IMR-90 (cell line): ENCODE measurements at regions of chr2 and their contacts with region 1.

Region 1: DNA sequence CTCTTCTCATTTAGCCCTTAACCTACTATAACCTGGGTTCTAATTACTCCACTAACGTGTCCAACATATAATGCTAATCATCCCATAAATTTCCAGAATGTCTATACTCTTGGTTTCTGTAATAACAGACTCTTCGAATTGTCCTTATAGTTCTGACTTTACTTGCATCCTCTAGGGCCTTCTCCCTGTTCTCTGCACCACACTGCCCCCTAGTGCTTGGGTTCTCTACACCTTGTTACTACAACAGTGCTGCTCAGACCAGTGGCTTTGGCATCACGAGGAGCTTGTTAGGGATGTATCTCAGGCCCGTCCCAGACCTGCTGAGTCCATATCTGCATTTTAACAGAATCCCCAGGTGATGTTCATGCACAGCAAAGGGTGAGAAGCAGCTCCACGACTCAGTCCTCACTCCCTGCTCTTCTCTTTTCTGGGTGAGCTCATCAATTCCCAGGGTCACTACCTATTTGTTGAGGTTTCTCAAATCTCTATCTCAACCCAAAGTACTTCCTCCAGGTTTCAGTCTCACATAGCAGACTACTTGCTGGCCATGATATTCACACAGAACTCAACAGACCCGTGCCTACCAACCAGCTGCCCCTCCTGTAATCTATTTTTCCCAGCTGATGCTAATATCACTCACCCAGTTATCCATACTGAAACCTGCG is 14.5 kb upstream of the DDX1 start:
- DNase-seq: peak; percentile 78
- ATAC-seq: peak; percentile 98
- H3K4me3 ChIP-seq: no peak overlapping the region
- H3K27ac ChIP-seq: no peak overlapping the region
- H3K4me1 ChIP-seq: no peaks in the 10 kb centered on the region
- H3K27me3 ChIP-seq: no peaks in the 10 kb centered on the region
- CTCF ChIP-seq: peak; percentile 84
- POLR2A ChIP-seq: no peak
- RAD21 ChIP-seq: peak; percentile 91

Region 2: DNA sequence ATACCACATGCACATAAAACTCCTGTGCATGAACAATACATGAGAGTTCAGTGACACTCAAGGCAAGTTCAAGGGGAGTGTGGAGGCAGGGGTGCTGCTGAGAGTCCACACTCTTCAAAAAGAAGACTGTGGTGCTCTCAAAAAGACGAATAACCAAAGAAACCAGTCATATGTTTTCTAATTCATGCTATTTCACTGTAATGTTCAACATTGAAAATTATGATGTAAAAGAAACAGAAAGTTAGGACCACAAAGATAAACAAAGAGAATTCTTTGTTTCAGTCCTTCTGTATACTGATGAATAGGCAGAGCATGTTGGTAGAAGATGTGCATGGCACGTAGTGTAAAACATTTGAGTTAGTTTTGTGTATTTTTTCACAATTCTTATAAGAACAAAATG is 1808.9 kb before region 1 on chr2:
- CTCF ChIA-PET with region 1: no interaction called
- POLR2A ChIA-PET with region 1: no interaction called
- dilution Hi-C with region 1: no loop called
- in situ Hi-C with region 1: no loop called
- intact Hi-C with region 1: no loop called
- DNase-seq: no peak
- ATAC-seq: no peak
- H3K4me3 ChIP-seq: no peak overlapping the region
- H3K27ac ChIP-seq: no peak overlapping the region
- H3K4me1 ChIP-seq: no peaks in the 10 kb centered on the region
- H3K27me3 ChIP-seq: no peaks in the 10 kb centered on the region
- CTCF ChIP-seq: no peak
- POLR2A ChIP-seq: no peak
- RAD21 ChIP-seq: no peak

Region 3: GRCh38 chr2:14428056-14428455 is 1149.1 kb before region 1 on chr2:
- CTCF ChIA-PET with region 1: no interaction called
- POLR2A ChIA-PET with region 1: no interaction called
- dilution Hi-C with region 1: no loop called
- in situ Hi-C with region 1: loop called (anchors 10 kb)
- intact Hi-C with region 1: loop called (anchors 5 kb)
- DNase-seq: peak; percentile 53
- ATAC-seq: peak; percentile 40; the same call in 1 of the 2 replicates
- H3K4me3 ChIP-seq: no peak overlapping the region
- H3K27ac ChIP-seq: no peak overlapping the region
- H3K4me1 ChIP-seq: no peaks in the 10 kb centered on the region
- H3K27me3 ChIP-seq: no peaks in the 10 kb centered on the region
- CTCF ChIP-seq: peak; percentile 44
- POLR2A ChIP-seq: no peak
- RAD21 ChIP-seq: peak; percentile 64

Region 4: GRCh38 chr2:14516844-14517243 is 1060.4 kb before region 1 on chr2:
- CTCF ChIA-PET with region 1: no interaction called
- POLR2A ChIA-PET with region 1: no interaction called
- dilution Hi-C with region 1: no loop called
- in situ Hi-C with region 1: loop called (anchors 25 kb)
- intact Hi-C with region 1: loop called (anchors 10 kb)
- DNase-seq: peak; percentile 99
- ATAC-seq: peak; percentile 95
- H3K4me3 ChIP-seq: no peak overlapping the region
- H3K27ac ChIP-seq: peak overlapping the region; percentile 45; the same call in 1 of the 2 replicates
- H3K4me1 ChIP-seq: peaks cover 5% of the 10 kb centered on the region
- H3K27me3 ChIP-seq: no peaks in the 10 kb centered on the region
- CTCF ChIP-seq: no peak
- POLR2A ChIP-seq: no peak
- RAD21 ChIP-seq: no peak

Region 5: DNA sequence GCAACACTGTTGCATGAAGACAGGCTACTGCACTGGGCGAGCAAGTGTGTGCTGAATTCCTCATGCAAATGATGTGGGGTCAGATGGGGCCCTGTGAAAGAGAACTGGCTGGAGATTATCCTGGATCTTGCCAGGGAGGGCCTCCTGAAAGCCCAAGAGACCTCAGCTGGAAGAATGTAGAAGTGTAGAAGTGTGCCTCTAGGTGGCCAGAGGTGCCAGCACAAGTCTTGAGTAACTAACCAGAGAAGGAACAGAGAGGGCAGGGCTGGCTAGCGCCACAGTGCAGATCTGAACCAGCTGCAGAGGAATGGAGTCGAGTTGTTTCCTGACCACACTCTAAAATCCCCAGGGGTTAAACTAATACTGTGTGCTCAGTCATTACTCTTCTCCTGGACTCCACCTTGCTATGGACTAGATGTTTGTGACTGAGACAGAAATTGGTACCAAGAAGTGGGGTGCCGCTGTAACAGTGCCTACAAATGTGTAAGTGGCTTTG is 545.4 kb before region 1 on chr2:
- CTCF ChIA-PET with region 1: no interaction called
- POLR2A ChIA-PET with region 1: no interaction called
- dilution Hi-C with region 1: no loop called
- in situ Hi-C with region 1: loop called (anchors 25 kb)
- intact Hi-C with region 1: no loop called
- DNase-seq: no peak
- ATAC-seq: no peak; the same call in 1 of the 2 replicates
- H3K4me3 ChIP-seq: no peak overlapping the region
- H3K27ac ChIP-seq: no peak overlapping the region
- H3K4me1 ChIP-seq: no peaks in the 10 kb centered on the region
- H3K27me3 ChIP-seq: no peaks in the 10 kb centered on the region; the same call in 1 of the 2 replicates
- CTCF ChIP-seq: no peak
- POLR2A ChIP-seq: no peak
- RAD21 ChIP-seq: no peak

Region 6: DNA sequence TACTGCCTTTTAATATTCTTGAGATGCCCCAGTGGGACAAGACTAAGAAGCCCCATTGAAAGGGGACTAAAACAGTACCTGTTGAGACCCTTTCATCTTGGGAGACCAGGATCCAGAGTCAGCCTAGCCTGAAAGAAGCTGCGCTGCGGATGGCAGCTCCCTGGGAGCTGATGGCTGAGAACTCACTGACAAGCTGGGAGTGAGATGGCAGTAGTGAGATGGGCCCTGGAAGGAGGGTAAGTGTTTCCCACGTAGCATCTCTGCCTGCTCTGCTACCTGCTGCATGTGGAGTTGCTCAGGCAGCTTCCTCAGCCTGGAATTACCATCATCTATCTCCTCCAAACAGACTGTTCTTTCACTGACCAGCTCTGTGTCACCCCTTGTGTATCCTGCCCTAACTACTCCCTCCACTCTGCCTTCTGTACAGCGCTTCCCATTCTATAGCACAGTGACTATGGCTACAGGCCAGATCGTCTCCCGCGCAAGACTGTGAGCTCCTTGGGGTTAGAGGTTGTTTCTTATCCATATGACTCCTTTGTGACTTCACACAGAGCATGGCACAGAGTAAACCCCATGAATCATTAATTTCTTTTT is 346.5 kb before region 1 on chr2:
- CTCF ChIA-PET with region 1: interaction called, 11 read pairs
- POLR2A ChIA-PET with region 1: no interaction called
- dilution Hi-C with region 1: no loop called
- in situ Hi-C with region 1: no loop called
- intact Hi-C with region 1: no loop called
- DNase-seq: no peak
- ATAC-seq: no peak
- H3K4me3 ChIP-seq: no peak overlapping the region
- H3K27ac ChIP-seq: no peak overlapping the region
- H3K4me1 ChIP-seq: no peaks in the 10 kb centered on the region
- H3K27me3 ChIP-seq: no peaks in the 10 kb centered on the region
- CTCF ChIP-seq: no peak
- POLR2A ChIP-seq: no peak
- RAD21 ChIP-seq: no peak

Region 7: GRCh38 chr2:15560988-15561573 is 16.1 kb before region 1 on chr2 and contains the start of gene NBAS:
- CTCF ChIA-PET with region 1: interaction called, 13 read pairs
- POLR2A ChIA-PET with region 1: no interaction called
- dilution Hi-C with region 1: no loop called
- in situ Hi-C with region 1: no loop called
- intact Hi-C with region 1: no loop called
- DNase-seq: peak; percentile 85
- ATAC-seq: peak; percentile 92
- H3K4me3 ChIP-seq: peak within 1 kb of the TSS; percentile 90
- H3K27ac ChIP-seq: peak within 1 kb of the TSS; percentile 98
- H3K4me1 ChIP-seq: no peaks in the 10 kb centered on the region
- H3K27me3 ChIP-seq: no peaks in the 10 kb centered on the region
- CTCF ChIP-seq: no peak
- POLR2A ChIP-seq: peak; percentile 75
- RAD21 ChIP-seq: no peak
- total RNA-seq, gene NBAS: 88.9 and 105 TPM in 2 replicates

Region 8: GRCh38 chr2:16425462-16426336 is 848.5 kb after region 1 on chr2:
- CTCF ChIA-PET with region 1: no interaction called
- POLR2A ChIA-PET with region 1: no interaction called
- dilution Hi-C with region 1: no loop called
- in situ Hi-C with region 1: no loop called
- intact Hi-C with region 1: no loop called
- DNase-seq: no peak
- ATAC-seq: no peak
- H3K4me3 ChIP-seq: no peak overlapping the region
- H3K27ac ChIP-seq: no peak overlapping the region
- H3K4me1 ChIP-seq: no peaks in the 10 kb centered on the region
- H3K27me3 ChIP-seq: no peaks in the 10 kb centered on the region
- CTCF ChIP-seq: no peak
- POLR2A ChIP-seq: no peak
- RAD21 ChIP-seq: no peak